Motor neuron (in vitro differentiated cells): ENCODE measurements at regions of chr18 and their contacts with region 1.

Region 1: GRCh38 chr18:2337552-2338141 is 233.7 kb downstream of the METTL4 start:
- ATAC-seq: peak in 2 of 8 experiments; percentile 55 to 67
- H3K4me3 ChIP-seq: no peak overlapping the region
- H3K27ac ChIP-seq: no peak overlapping the region
- H3K4me1 ChIP-seq: no peaks in the 10 kb centered on the region

Region 2: GRCh38 chr18:2240311-2240705 is 97.3 kb before region 1 on chr18:
- in situ Hi-C with region 1: loop called in 1 of 9 experiments (anchors 25 kb)
- ATAC-seq: no peak
- H3K4me3 ChIP-seq: no peak overlapping the region
- H3K27ac ChIP-seq: no peak overlapping the region
- H3K4me1 ChIP-seq: peaks cover 0 to 2% of the 10 kb centered on the region in 2 donors

Region 3: GRCh38 chr18:2515908-2516625 is 178.4 kb after region 1 on chr18:
- in situ Hi-C with region 1: loop called in 1 of 9 experiments (anchors 25 kb)
- ATAC-seq: peak in 3 of 8 experiments; percentile 18 to 93 (median 92)
- H3K4me3 ChIP-seq: no peak overlapping the region
- H3K27ac ChIP-seq: no peak overlapping the region
- H3K4me1 ChIP-seq: no peaks in the 10 kb centered on the region

Region 4: DNA sequence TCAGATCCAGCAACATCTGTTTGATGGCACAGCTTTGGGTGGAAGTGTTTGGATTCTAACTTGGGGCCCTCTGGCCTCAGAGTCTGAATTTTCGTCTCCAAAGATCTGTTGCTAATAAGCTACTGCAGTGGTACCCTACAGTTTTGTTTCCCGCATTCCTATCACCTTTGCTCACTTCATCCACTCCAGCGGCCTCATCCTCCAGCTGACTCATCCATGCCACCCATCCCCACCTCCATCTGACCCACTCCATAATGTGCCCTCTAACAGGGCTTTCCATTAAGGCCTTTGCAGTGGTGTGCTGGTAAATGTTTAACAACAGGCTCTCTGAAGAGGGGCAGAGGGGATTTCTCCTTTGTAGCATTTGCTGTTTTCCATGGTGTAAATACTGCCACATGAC is 1337.8 kb after region 1 on chr18:
- in situ Hi-C with region 1: no loop called
- ATAC-seq: no peak
- H3K4me3 ChIP-seq: no peak overlapping the region
- H3K27ac ChIP-seq: no peak overlapping the region
- H3K4me1 ChIP-seq: no peaks in the 10 kb centered on the region